Mammary epithelial cell (primary cell): ENCODE measurements at regions of chr11 and their contacts with region 1.

Region 1: DNA sequence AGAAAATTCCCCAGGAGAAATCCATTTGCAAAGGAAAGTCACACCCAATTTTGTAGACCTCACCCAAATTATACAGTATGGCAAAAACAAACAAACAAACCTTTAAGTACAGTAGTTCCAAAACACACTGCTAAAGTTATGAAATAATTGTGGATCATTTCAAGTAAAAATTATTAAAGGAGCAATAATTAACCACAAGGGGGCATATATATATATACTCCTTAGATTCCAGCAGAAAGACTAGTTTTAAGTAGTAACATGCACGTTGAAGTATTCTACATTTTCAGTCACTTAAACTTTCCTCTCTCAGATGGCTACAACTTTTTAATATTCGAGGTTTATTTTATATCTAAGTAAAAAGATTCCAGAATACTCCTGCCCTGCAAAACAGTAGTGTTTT is 26.8 kb downstream of the RNF141 start:
- DNase-seq: no peak
- H3K4me3 ChIP-seq: no peak overlapping the region
- H3K27ac ChIP-seq: no peak overlapping the region
- H3K4me1 ChIP-seq: peaks cover 18% of the 10 kb centered on the region
- H3K27me3 ChIP-seq: no peaks in the 10 kb centered on the region
- CTCF ChIP-seq: peak; percentile 22 to 30

Region 2: DNA sequence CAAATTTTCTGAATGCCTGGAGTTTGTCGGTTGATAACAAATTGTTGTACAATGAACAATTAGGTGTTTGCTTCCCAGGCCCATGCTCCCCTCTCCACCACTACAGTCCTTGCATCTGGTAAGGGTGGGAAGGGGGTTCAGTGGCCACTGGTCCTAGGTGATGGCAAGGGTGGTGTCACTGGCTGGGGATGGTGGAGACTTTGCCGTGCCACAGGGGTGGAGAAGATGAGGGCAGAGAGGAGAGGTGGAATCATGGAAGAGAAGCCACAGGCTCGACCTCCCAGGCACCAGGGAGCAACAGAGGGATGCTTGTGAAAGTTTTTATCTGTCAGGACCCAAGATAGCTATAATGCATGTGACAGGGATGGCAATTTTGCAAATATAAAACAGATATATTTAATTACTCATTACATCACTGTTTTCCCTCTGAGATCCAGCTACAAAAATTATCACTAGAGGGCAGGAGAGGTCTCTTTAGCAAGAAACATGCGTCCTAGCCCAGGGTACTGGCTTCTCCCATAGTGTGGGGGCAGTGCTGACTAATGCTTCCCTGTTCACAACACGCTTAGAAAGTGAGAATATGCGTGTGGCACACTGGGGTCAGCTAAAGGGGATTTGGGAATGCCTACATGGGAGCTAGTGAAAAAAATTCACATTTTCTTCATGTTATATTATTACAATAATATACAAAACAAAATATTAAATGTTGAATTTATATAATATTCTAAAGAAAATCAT is 108.2 kb before region 1 on chr11:
- CTCF ChIA-PET with region 1: no interaction called
- dilution Hi-C with region 1: no loop called
- in situ Hi-C with region 1: no loop called
- intact Hi-C with region 1: loop called (anchors 2 kb)
- DNase-seq: peak; percentile 68
- H3K4me3 ChIP-seq: no peak overlapping the region
- H3K27ac ChIP-seq: peak overlapping the region; percentile 15
- H3K4me1 ChIP-seq: peaks cover 19% of the 10 kb centered on the region
- H3K27me3 ChIP-seq: no peaks in the 10 kb centered on the region
- CTCF ChIP-seq: peak; percentile 77 to 80

Region 3: DNA sequence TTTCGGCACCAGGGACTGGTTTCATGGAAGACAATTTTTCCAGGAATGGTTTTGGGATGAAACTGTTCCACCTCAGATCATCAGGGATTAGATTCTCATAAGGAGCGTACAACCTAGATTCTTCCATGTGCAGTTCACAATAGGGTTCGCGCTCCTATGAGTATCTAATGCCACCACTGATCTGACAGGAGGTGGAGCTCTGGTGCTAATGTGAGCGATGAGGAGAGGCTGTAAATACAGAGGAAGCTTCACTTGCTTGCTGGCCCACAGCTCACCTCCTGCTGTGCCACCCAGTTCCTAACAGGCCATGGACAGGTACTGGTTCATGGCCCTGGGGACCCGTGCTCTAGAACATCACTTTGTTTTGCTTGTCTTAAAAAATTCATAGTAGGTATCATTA is 100.9 kb before region 1 on chr11:
- CTCF ChIA-PET with region 1: no interaction called
- dilution Hi-C with region 1: no loop called
- in situ Hi-C with region 1: no loop called
- intact Hi-C with region 1: loop called (anchors 1 kb)
- DNase-seq: peak; percentile 27
- H3K4me3 ChIP-seq: no peak overlapping the region
- H3K27ac ChIP-seq: no peak overlapping the region
- H3K4me1 ChIP-seq: peaks cover 12% of the 10 kb centered on the region
- H3K27me3 ChIP-seq: no peaks in the 10 kb centered on the region
- CTCF ChIP-seq: peak in 1 of 2 donors; percentile 45

Region 4: DNA sequence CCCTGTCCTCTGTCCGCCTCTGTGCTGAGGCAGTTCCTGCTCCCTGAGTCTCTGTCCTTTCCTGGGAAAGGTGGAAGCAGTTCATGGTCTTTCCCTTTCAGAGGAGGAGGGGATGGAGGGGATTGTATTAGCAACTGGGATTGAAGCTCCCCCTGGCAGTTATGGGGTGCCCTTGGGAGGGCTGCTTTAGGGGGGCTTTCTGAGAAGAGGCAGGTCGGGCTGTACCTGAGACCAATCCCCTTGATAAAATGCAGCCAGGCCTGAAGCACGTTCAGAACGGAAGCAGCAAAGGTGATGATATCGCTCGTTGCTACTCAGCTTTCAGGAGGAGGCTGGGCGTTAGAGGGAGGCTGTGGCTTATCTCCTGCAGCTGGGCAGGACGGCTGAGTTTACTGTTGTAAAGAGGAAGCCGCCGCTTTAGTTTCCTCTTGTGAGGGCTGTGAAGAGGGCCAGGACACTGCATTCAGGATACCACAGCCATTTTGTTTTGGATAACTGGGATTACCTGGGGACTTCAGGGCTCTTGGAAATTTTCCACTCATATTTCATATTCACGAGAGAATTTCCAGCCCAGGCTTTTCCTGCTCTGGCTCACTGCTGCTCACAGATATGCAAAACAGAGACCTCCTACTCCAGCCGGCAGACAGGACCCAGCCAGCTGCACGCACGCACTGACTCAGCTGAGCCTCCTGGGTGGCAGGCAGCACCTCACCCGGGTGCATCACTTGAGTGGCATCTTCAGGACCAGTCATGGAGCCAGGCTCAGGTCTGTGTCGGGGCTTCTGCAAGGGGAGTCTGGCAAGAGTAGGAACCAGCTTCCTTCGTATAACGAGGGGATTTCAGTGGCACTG is 58.3 kb before region 1 on chr11:
- CTCF ChIA-PET with region 1: interaction called, 3 read pairs
- dilution Hi-C with region 1: no loop called
- in situ Hi-C with region 1: no loop called
- intact Hi-C with region 1: loop called (anchors 2 kb)
- DNase-seq: peak; percentile 36
- H3K4me3 ChIP-seq: no peak overlapping the region
- H3K27ac ChIP-seq: peak overlapping the region; percentile 14
- H3K4me1 ChIP-seq: peaks cover 42% of the 10 kb centered on the region
- H3K27me3 ChIP-seq: no peaks in the 10 kb centered on the region
- CTCF ChIP-seq: no peak

Region 5: DNA sequence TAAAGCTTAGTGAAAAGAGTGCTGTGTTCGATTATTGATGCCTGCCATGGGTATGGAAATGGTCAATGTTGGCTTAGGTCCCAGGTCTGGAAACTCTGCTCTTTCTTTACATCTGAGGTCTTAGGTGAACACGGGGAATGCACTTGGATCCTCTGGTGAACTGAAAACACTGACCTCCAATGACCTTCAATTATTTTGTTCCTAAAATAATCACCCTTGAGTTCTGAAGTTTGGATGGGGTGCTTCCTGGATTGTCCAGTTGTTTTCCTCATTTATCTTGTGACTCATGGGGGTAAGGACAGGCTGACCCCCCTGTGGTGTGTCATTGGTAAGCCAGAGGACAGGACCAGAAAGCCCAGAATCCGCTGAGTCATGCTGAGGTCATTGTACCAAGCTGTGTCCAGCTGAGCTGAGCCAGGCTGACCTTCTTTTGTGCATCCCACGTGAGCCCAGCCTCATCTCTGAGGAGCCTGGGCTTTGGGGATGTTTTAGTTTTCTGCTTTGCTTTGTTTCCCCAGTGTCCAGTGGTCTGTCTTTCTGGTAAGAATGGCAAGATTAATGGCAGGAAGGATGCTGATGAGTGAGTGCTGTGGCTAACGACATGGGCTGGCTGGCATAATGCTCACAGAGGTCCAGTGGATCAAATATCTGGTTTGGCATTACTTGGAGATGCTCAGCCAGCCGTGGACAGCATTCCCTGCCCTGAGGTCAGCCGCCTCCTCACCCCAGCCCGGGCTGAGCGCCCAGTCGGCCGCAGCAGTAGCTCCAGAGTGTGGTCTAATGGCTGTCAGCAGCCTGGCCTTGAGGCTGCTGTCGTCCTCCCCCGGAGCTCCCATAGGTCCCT is 23.6 kb before region 1 on chr11:
- CTCF ChIA-PET with region 1: no interaction called
- dilution Hi-C with region 1: no loop called
- in situ Hi-C with region 1: no loop called
- intact Hi-C with region 1: loop called (anchors 2 kb)
- DNase-seq: peak; percentile 81
- H3K4me3 ChIP-seq: no peak overlapping the region
- H3K27ac ChIP-seq: peak overlapping the region; percentile 90
- H3K4me1 ChIP-seq: peaks cover 38% of the 10 kb centered on the region
- H3K27me3 ChIP-seq: no peaks in the 10 kb centered on the region
- CTCF ChIP-seq: no peak

Region 6: GRCh38 chr11:10540923-10541560 is 26.8 kb after region 1 on chr11 and contains the start of gene RNF141:
- CTCF ChIA-PET with region 1: interaction called, 5 read pairs
- dilution Hi-C with region 1: no loop called
- in situ Hi-C with region 1: no loop called
- intact Hi-C with region 1: loop called (anchors 2 kb)
- DNase-seq: peak; percentile 91
- H3K4me3 ChIP-seq: peak within 1 kb of the TSS; percentile 64 to 89 (median 72)
- H3K27ac ChIP-seq: peak within 1 kb of the TSS; percentile 85
- H3K4me1 ChIP-seq: peaks cover 9% of the 10 kb centered on the region
- H3K27me3 ChIP-seq: no peaks in the 10 kb centered on the region
- CTCF ChIP-seq: peak; percentile 69 to 91
- total RNA-seq, gene RNF141: 45.7 to 58.2 TPM

Region 7: DNA sequence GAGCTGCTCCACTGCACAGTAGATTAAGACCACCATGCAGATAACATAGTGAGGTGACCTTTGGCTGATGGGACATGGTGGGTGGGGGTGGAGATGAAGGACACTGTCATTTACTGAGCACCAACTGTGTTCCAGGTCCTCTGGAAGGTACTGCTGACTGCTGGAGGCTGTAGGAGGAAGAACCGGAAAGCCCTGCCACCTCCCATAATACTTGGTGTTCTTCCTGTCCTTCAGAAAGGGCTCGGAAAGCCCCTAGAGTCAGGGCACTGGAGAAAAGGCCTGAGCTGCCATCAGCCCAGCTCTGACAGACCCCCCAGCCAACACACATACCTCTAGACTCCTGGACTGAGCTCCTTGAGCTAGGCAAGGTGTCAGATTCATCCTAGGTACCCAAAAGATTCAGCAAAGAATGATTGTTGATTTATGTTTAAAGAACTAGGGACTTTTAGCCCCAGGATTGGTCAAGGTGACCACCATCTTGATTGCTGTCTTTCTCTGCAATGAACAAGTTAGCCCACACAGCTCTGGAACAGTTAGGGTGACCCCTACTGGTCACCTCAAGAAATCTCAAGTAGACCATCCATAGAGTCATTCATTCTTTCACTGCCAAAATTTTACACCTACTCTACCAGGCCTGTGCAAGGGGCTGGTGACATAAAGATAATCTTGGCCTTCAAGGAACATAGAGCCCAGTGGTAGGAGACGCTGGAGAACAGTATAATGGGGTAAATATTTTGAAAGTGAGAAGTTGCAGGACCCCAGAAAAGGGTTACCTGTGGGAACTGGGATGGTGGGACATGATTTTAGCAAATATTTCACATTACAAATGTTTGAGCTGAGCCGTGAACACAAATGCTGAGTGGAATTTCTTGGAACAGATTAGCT is 140.0 kb after region 1 on chr11:
- CTCF ChIA-PET with region 1: no interaction called
- dilution Hi-C with region 1: no loop called
- in situ Hi-C with region 1: no loop called
- intact Hi-C with region 1: loop called (anchors 1 kb)
- DNase-seq: peak; percentile 55
- H3K4me3 ChIP-seq: no peak overlapping the region
- H3K27ac ChIP-seq: no peak overlapping the region
- H3K4me1 ChIP-seq: peaks cover 25% of the 10 kb centered on the region
- H3K27me3 ChIP-seq: no peaks in the 10 kb centered on the region
- CTCF ChIP-seq: peak; percentile 65 to 74

Region 8: GRCh38 chr11:10722307-10722706 is 208.1 kb after region 1 on chr11:
- CTCF ChIA-PET with region 1: no interaction called
- dilution Hi-C with region 1: no loop called
- in situ Hi-C with region 1: no loop called
- intact Hi-C with region 1: no loop called
- DNase-seq: no peak
- H3K4me3 ChIP-seq: no peak overlapping the region
- H3K27ac ChIP-seq: no peak overlapping the region
- H3K4me1 ChIP-seq: peaks cover 15% of the 10 kb centered on the region
- H3K27me3 ChIP-seq: no peaks in the 10 kb centered on the region
- CTCF ChIP-seq: no peak

Region 9: GRCh38 chr11:10878408-10879214 is 364.4 kb after region 1 on chr11:
- CTCF ChIA-PET with region 1: no interaction called
- dilution Hi-C with region 1: no loop called
- in situ Hi-C with region 1: no loop called
- intact Hi-C with region 1: no loop called
- DNase-seq: peak; percentile 52
- H3K4me3 ChIP-seq: no peak overlapping the region
- H3K27ac ChIP-seq: no peak overlapping the region
- H3K4me1 ChIP-seq: peaks cover 4% of the 10 kb centered on the region
- H3K27me3 ChIP-seq: no peaks in the 10 kb centered on the region
- CTCF ChIP-seq: peak; percentile 81 to 84